ENCODE measurements at regions of chr11 and their contacts with region 1.

Region 1: DNA sequence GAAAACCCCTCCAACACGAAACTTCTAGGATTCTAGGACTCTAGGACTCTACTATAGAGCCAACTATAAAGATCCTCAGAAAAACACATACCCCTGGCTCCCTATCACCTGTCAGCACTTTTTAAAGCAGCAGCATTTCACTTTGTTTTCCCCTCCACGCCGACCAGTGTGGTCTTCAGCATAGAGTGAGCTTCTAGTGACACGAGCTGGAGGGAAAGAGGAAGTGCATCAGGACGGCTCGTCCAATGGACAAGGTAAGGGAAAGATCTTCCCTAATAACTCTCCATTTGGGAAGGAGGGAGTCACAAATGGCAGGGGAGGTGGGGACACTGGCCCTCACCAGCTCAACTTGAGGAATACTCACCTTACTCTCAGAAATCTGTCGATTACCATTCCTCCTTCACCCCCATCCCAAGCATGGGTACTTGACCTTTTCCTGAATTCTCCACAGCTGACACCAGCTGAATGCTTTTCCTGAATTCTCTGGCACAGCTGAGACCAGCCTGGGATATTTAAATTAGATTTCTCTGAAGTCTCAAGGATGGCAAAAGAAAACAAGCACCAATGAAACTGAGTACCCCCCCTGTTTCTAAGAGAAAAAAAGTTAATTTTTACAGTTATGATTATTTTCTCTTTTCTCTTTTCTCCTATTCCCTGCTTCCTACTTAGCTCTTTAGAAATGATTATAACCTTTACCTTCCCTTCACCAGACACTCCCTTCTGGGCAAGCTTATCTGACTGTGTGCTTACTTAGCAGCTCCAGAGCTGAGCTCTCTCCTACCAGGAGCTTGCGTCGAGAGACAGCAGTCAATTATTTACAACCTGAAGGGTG is 33.3 kb upstream of the NNMT start:
- DNase-seq: peak; percentile 26
- ATAC-seq: peak; percentile 87
- H3K4me3 ChIP-seq: no peak overlapping the region
- H3K27ac ChIP-seq: no peak overlapping the region
- H3K4me1 ChIP-seq: no peaks in the 10 kb centered on the region
- H3K27me3 ChIP-seq: peaks cover 25% of the 10 kb centered on the region; the same call in 1 of the 2 replicates
- CTCF ChIP-seq: peak; percentile 37 to 67 (median 62); a peak in 5 of 6 replicates
- POLR2A ChIP-seq: no peak
- RAD21 ChIP-seq: peak; percentile 79

Region 2: DNA sequence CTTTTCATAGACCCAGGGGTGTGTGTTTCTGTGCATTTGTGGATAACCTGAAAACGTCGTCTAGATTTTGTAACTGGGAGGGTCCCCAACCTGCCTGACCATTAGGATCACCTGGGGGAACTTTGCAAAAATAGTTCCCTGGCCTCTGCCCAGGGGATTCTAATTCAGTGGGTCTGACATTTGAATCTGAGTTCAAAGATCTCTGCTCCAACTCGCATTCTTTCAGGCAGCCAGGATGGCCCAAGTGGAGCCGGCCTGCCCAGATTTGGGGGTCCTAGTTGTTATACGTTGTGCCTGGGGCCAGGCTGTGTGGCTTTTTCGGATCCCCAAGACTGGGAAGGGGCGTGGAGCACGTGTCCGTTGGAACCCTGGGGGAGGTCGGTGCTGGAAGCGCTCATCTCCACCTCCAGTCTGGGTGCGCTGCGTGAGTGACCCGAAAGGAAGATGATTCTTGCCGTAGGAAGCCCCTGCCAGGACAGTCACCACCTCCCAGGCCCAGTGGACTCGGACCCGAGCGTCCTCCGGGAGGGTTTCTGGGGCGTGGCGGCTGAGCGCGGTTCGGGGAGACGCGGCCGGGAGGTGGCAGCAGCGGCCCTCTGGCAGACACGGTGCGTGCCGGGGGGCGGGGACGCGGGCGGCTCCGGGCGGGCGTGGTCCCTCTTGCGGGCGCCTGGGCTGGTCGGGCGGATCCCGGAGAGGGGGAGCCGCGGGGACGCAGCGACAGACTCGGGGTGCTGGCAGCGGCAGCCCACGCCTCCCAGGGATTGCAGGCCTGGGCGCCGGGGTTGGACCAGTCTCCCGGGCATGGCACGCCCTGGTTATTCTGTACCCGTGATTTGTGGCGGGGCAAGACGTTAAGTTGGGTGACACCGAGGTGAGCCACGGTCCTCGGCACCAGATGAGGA is 1973.1 kb before region 1 on chr11:
- CTCF ChIA-PET with region 1: no interaction called
- POLR2A ChIA-PET with region 1: no interaction called
- RAD21 ChIA-PET with region 1: no interaction called
- intact Hi-C with region 1: loop called (anchors 5 kb)
- DNase-seq: no peak
- ATAC-seq: peak; percentile 98
- H3K4me3 ChIP-seq: peak overlapping the region; percentile 38 to 62
- H3K27ac ChIP-seq: no peak overlapping the region
- H3K4me1 ChIP-seq: peaks cover 2 to 25% of the 10 kb centered on the region in 2 experiments; a peak in 3 of 4 replicates
- H3K27me3 ChIP-seq: no peaks in the 10 kb centered on the region
- CTCF ChIP-seq: peak; percentile 70 to 80 (median 74)
- POLR2A ChIP-seq: no peak
- RAD21 ChIP-seq: peak; percentile 89

Region 3: GRCh38 chr11:113806406-113806805 is 456.5 kb before region 1 on chr11:
- CTCF ChIA-PET with region 1: interaction called, 43 read pairs
- POLR2A ChIA-PET with region 1: no interaction called
- RAD21 ChIA-PET with region 1: interaction called, 3 read pairs
- intact Hi-C with region 1: loop called (anchors 1 kb)
- DNase-seq: peak; percentile 12
- ATAC-seq: peak; percentile 97
- H3K4me3 ChIP-seq: no peak overlapping the region
- H3K27ac ChIP-seq: no peak overlapping the region
- H3K4me1 ChIP-seq: no peaks in the 10 kb centered on the region
- H3K27me3 ChIP-seq: no peaks in the 10 kb centered on the region
- CTCF ChIP-seq: peak; percentile 21 to 64 (median 64); a peak in 4 of 6 replicates
- POLR2A ChIP-seq: no peak
- RAD21 ChIP-seq: peak; percentile 35; the same call in 1 of the 2 replicates

Region 4: GRCh38 chr11:113906038-113906437 is 356.9 kb before region 1 on chr11:
- CTCF ChIA-PET with region 1: interaction called, 16 read pairs
- POLR2A ChIA-PET with region 1: no interaction called
- RAD21 ChIA-PET with region 1: no interaction called
- intact Hi-C with region 1: no loop called
- DNase-seq: peak; percentile 45
- ATAC-seq: peak; percentile 92
- H3K4me3 ChIP-seq: no peak overlapping the region
- H3K27ac ChIP-seq: no peak overlapping the region
- H3K4me1 ChIP-seq: no peaks in the 10 kb centered on the region
- H3K27me3 ChIP-seq: peaks cover 15% of the 10 kb centered on the region; the same call in 1 of the 2 replicates
- CTCF ChIP-seq: peak; percentile 18 to 55 (median 46); a peak in 3 of 6 replicates
- POLR2A ChIP-seq: no peak
- RAD21 ChIP-seq: peak; percentile 36

Region 5: DNA sequence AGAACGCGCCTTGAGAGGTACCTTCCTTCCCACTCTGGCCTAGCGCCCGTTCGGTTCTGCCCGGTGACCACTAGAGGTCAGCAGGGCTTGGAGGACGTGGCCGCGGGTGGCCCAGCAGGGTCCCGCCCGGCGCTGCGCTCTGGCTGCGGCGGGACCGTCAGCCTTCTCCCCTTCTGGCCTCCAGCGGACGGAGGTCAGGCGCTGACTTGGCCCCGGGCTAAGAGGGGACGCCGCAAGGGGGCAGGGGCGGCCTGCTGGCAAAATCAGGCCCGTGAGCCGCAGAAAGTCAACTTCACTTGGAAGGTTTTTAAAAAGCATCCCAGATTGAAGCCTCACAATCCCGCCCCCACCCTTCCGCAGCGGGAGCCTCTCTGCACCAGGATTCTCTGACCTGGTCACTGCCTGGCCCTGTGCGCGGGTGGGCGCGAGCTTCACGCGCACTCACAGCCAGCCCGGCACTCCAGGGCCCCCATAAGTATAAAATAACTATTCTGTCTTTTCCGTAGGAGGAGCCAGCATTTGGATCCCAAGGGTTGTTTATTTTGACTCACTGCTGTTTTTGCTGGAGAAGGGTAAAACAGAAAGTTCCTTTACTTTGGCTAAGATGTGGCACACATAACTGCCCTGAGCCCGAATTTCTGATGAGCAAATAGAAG is 226.6 kb before region 1 on chr11:
- CTCF ChIA-PET with region 1: interaction called, 15 read pairs
- POLR2A ChIA-PET with region 1: no interaction called
- RAD21 ChIA-PET with region 1: no interaction called
- intact Hi-C with region 1: loop called (anchors 2 kb)
- DNase-seq: peak; percentile 41
- ATAC-seq: peak; percentile 93
- H3K4me3 ChIP-seq: peak overlapping the region in 1 of 2 experiments; percentile 36; a peak in 2 of 4 replicates
- H3K27ac ChIP-seq: no peak overlapping the region
- H3K4me1 ChIP-seq: peaks cover 9 to 14% of the 10 kb centered on the region in 2 experiments; a peak in 3 of 4 replicates
- H3K27me3 ChIP-seq: no peaks in the 10 kb centered on the region
- CTCF ChIP-seq: peak; percentile 74 to 83 (median 74)
- POLR2A ChIP-seq: no peak
- RAD21 ChIP-seq: peak; percentile 76

Region 6: DNA sequence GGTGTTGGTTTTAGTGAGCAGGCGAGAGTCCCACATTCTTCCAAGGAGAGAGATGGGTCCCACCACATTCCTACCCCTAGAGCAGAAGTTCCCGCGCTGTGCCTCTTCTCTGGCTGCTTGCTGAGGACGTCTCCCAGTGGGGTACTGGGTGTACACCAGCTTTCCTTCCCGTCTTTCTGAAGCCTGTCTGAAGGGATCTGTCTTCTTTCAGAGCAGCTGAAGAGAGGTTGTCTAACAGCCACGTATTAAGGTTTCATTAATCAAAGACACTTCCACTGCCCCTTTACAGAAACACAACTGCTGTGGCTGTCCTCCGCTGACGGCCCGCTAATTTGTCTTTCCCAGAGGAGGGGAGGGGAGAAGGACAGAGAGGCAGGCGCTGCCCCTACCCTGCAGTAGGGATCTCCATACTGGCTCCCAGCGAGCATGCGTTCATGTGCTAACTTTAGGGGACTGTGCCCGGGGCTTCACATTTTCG is 147.4 kb before region 1 on chr11:
- CTCF ChIA-PET with region 1: no interaction called
- POLR2A ChIA-PET with region 1: no interaction called
- RAD21 ChIA-PET with region 1: no interaction called
- intact Hi-C with region 1: no loop called
- DNase-seq: no peak
- ATAC-seq: no peak
- H3K4me3 ChIP-seq: no peak overlapping the region
- H3K27ac ChIP-seq: no peak overlapping the region
- H3K4me1 ChIP-seq: no peaks in the 10 kb centered on the region
- H3K27me3 ChIP-seq: peaks cover 87% of the 10 kb centered on the region
- CTCF ChIP-seq: no peak
- POLR2A ChIP-seq: no peak
- RAD21 ChIP-seq: no peak

Region 7: GRCh38 chr11:114678125-114679036 is 415.5 kb after region 1 on chr11 and contains the start of gene NXPE2:
- CTCF ChIA-PET with region 1: no interaction called
- POLR2A ChIA-PET with region 1: no interaction called
- RAD21 ChIA-PET with region 1: no interaction called
- intact Hi-C with region 1: no loop called
- DNase-seq: no peak
- ATAC-seq: no peak
- H3K4me3 ChIP-seq: no peak within 1 kb of the TSS
- H3K27ac ChIP-seq: no peak within 1 kb of the TSS
- H3K4me1 ChIP-seq: no peaks in the 10 kb centered on the region
- H3K27me3 ChIP-seq: no peaks in the 10 kb centered on the region
- CTCF ChIP-seq: no peak
- POLR2A ChIP-seq: no peak
- RAD21 ChIP-seq: no peak
- total RNA-seq, gene NXPE2: not detected